Heart left ventricle (tissue), 16 donors: ENCODE measurements at regions of chrX and their contacts with region 1.

Region 1: DNA sequence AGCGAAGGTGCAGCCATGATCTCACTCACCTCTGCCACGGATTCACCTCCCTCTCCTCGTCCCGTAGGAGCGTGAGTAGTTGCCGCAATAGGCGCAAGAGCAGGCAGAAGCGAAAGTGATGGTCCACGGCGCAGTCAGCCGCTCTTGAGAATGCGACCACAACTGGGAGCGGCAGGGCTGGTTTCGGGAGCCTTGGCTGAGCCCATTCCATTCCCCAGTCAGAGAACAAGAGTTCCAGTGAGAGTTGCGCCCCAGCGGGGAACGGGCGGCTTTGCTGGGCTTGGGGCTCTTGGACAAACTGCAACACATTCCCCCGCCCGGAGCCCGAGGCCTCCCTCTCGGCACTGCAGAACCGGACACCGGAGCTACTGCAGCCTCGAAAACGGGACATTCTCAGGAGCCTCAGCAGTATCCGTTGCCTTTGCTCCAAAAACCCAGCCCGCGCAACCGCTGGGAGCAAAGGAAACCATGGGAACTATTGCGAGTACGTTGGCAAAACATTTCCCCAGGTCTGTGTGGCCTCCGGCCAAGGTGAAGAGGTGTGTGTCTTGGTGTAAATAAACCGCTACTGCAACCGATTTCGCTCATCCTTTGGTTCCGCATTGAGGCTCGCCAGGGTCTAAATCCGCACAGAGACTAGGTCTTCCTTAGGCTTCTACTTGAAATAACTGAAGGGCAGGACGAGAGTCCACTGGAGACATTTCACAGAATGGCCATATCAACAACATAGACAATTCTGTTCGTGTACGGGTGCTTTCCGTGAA is 5.7 kb upstream of the ZBTB33 start:
- DNase-seq: peak; percentile 66 to 82 (median 74)
- ATAC-seq: peak; percentile 87 to 96 (median 92)
- H3K4me3 ChIP-seq: peak overlapping the region; percentile 51 to 95 (median 70)
- H3K27ac ChIP-seq: peak overlapping the region; percentile 65 to 90 (median 84)
- H3K4me1 ChIP-seq: peaks cover 0 to 13% (median 6%) of the 10 kb centered on the region in 12 donors
- H3K27me3 ChIP-seq: peaks cover 0 to 3% (median 0%) of the 10 kb centered on the region in 9 donors
- CTCF ChIP-seq: no peak
- POLR2A ChIP-seq: no peak

Region 2: DNA sequence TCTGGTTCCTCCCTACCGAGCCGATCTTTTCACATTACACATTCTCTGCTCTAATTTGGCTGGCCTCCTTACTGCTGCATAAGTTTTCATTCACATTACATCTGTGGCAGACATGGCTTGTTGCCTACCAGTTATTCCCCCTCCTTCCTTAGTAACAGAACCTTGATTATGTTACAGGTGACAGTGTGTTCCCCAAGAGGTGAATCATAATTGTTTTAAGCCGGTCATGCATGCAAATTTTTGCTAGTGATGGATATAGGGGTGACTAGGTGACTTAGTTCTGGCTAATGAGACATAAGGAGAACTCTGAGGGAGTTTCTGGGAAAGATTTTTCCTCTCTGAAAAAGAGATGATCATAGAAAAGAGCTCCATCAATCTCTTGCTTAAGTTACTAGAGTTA is 232.5 kb after region 1 on chrX:
- intact Hi-C with region 1: loop called in 2 of 10 experiments (anchors 5 to 10 kb)
- DNase-seq: no peak
- ATAC-seq: no peak
- H3K4me3 ChIP-seq: no peak overlapping the region
- H3K27ac ChIP-seq: no peak overlapping the region
- H3K4me1 ChIP-seq: no peaks in the 10 kb centered on the region
- H3K27me3 ChIP-seq: peaks cover 0 to 10% (median 0%) of the 10 kb centered on the region in 9 donors
- CTCF ChIP-seq: no peak
- POLR2A ChIP-seq: no peak